ENCODE measurements at regions of chr17 and their contacts with region 1.

Region 1: DNA sequence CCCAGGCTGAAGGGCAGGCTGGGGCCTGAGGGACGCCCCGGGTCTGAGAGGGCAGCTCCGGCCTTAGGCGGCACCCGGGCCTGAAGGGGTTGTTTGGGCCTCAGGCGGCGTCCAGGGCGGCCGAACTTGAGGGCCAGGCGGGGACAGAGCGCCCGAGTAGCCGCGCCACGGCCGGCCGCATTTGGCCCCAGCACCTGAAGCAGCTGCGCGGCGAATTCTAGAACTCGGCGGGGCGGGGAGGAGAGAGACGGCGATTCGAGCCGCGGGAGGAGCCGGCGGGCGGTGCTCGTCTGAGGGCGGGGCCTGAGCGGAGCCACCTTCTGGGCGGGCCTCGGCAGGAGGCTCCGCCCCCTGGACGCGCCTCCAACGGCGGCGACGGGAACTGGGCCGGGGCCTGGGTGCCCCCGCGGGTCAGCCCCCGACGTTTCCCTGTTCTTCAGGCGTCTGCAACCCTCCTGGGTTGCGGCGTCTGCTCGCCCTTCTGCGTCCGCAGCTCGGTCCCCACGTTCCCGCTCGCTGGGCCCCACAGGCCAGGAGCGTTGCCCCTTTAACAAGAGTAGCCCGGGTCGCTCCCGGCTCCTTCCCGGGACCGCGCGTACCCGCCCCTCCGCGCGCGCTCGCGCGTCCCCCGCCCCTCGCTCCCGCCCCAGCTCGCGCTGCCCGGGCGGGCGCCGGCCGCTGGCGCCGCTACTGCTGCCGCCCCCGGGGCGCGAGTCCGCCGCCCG is at the starts of genes INCA1 and KIF1C:
- DNase-seq: peak; percentile 96
- ATAC-seq: peak; percentile 95
- H3K4me3 Mint-ChIP-seq: peak within 1 kb of the TSS; percentile 80
- H3K27ac Mint-ChIP-seq: peak within 1 kb of the TSS; percentile 55
- H3K4me1 Mint-ChIP-seq: peaks cover 20% of the 10 kb centered on the region
- H3K27me3 Mint-ChIP-seq: no peaks in the 10 kb centered on the region
- total RNA-seq, gene INCA1: 0.18 to 0.28 TPM
- total RNA-seq, gene KIF1C: 32.6 to 43.0 TPM

Region 2: GRCh38 chr17:3893003-3893719 is 1104.3 kb before region 1 on chr17 and contains the start of gene CAMKK1:
- CTCF ChIA-PET with region 1: no interaction called
- POLR2A ChIA-PET with region 1: no interaction called
- intact Hi-C with region 1: loop called in 1 of 2 experiments (anchors 1 kb)
- DNase-seq: peak; percentile 94
- ATAC-seq: peak; percentile 88
- H3K4me3 Mint-ChIP-seq: peak within 1 kb of the TSS; percentile 76
- H3K27ac Mint-ChIP-seq: peak within 1 kb of the TSS; percentile 77
- H3K4me1 Mint-ChIP-seq: peaks cover 36% of the 10 kb centered on the region
- H3K27me3 Mint-ChIP-seq: no peaks in the 10 kb centered on the region
- total RNA-seq, gene CAMKK1: 4.5 to 5.4 TPM

Region 3: DNA sequence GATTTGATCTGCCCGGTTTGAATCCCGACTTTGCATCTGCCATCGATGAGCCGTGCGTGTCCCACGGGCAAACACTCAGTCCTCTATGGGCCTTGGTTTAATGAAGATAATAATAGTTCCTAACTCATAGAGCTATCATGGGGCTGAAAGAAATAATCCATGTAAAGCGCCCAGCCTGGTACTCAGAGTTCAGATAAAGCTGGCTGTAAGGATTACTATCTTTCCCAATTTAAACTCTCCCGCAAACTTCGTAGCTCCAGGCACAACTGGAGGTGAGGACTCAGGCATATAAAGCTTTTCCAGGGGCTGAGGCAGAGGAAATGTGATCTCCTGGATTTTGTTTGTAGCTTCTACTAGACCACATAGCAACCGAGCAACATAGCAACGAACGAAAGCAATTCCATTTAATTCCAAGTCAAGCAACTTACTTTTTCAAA is 372.3 kb before region 1 on chr17:
- CTCF ChIA-PET with region 1: no interaction called
- POLR2A ChIA-PET with region 1: no interaction called
- intact Hi-C with region 1: no loop called
- DNase-seq: no peak
- ATAC-seq: no peak
- H3K4me3 Mint-ChIP-seq: no peak overlapping the region
- H3K27ac Mint-ChIP-seq: no peak overlapping the region
- H3K4me1 Mint-ChIP-seq: no peaks in the 10 kb centered on the region
- H3K27me3 Mint-ChIP-seq: peaks cover 13% of the 10 kb centered on the region

Region 4: GRCh38 chr17:4833178-4833940 is 164.1 kb before region 1 on chr17 and contains the start of gene MINK1:
- CTCF ChIA-PET with region 1: no interaction called
- POLR2A ChIA-PET with region 1: no interaction called
- intact Hi-C with region 1: loop called in 1 of 2 experiments (anchors 1 kb)
- DNase-seq: peak; percentile 92
- ATAC-seq: peak; percentile 93
- H3K4me3 Mint-ChIP-seq: peak within 1 kb of the TSS; percentile 90
- H3K27ac Mint-ChIP-seq: peak within 1 kb of the TSS; percentile 91
- H3K4me1 Mint-ChIP-seq: peaks cover 28% of the 10 kb centered on the region
- H3K27me3 Mint-ChIP-seq: no peaks in the 10 kb centered on the region
- total RNA-seq, gene MINK1: 48.2 to 57.7 TPM

Region 5: GRCh38 chr17:4948931-4949320 is 48.5 kb before region 1 on chr17:
- CTCF ChIA-PET with region 1: no interaction called
- POLR2A ChIA-PET with region 1: interaction called, 3 read pairs
- intact Hi-C with region 1: loop called (anchors 1 to 5 kb)
- DNase-seq: peak; percentile 88
- ATAC-seq: peak; percentile 39
- H3K4me3 Mint-ChIP-seq: peak overlapping the region; percentile 99
- H3K27ac Mint-ChIP-seq: peak overlapping the region; percentile 100
- H3K4me1 Mint-ChIP-seq: peaks cover 34% of the 10 kb centered on the region
- H3K27me3 Mint-ChIP-seq: no peaks in the 10 kb centered on the region

Region 6: GRCh38 chr17:5019475-5019956 is 22.1 kb after region 1 on chr17:
- CTCF ChIA-PET with region 1: interaction called, 3 read pairs
- POLR2A ChIA-PET with region 1: interaction called, 3 read pairs
- intact Hi-C with region 1: loop called in 1 of 2 experiments (anchors 1 kb)
- DNase-seq: peak; percentile 67
- ATAC-seq: peak; percentile 93
- H3K4me3 Mint-ChIP-seq: no peak overlapping the region
- H3K27ac Mint-ChIP-seq: peak overlapping the region; percentile 56
- H3K4me1 Mint-ChIP-seq: peaks cover 11% of the 10 kb centered on the region
- H3K27me3 Mint-ChIP-seq: no peaks in the 10 kb centered on the region

Region 7: GRCh38 chr17:5281814-5282653 is 284.6 kb after region 1 on chr17 and contains the start of gene RABEP1:
- CTCF ChIA-PET with region 1: no interaction called
- POLR2A ChIA-PET with region 1: no interaction called
- intact Hi-C with region 1: loop called in 1 of 2 experiments (anchors 5 kb)
- DNase-seq: peak; percentile 97
- ATAC-seq: peak; percentile 81
- H3K4me3 Mint-ChIP-seq: peak within 1 kb of the TSS; percentile 86
- H3K27ac Mint-ChIP-seq: peak within 1 kb of the TSS; percentile 90
- H3K4me1 Mint-ChIP-seq: peaks cover 32% of the 10 kb centered on the region
- H3K27me3 Mint-ChIP-seq: no peaks in the 10 kb centered on the region
- total RNA-seq, gene RABEP1: 60.4 to 66.2 TPM